Spleen (tissue), 13 donors: ENCODE measurements at regions of chr4 and their contacts with region 1.

Region 1: DNA sequence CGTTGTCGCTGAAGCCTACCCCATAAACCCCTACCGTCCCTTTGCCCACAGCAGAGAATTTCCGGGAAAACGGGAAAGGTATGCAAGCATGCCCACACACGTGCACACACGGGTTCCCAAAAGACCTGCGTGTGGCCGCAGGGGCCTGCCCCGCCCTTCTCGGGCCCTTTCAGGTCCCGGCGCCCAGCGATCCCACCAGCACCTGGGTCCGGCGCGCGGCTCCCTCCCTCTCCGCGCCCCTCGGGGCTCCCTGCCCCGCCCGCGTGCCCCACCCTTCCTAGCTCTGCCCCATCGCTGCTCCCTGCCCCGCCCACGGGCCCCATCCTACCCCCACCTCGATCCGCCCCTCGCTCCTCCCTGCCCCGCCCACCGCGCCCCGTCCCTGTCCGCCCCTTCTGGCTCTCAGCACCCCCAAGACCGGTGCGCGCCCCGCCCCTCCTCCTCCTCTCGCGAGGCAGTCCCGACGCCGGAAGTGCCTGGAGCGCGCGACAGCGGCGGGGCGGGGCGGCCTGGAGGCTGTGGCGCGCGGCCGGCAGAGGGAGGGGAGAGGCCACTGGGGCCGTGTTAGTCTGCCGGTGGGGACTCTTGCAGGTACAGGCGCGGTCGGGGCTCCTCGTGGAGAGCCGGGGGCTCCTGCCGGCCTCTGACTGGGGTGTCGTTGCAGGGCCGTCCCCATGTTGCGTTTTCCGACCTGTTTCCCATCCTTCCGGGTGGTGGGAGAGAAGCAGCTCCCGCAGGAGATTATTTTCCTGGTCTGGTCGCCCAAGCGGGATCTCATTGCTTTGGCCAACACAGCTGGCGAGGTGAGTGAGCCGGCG is at the start of gene ANAPC4:
- DNase-seq: peak; percentile 99
- H3K4me3 ChIP-seq: peak within 1 kb of the TSS; percentile 56 to 94 (median 86)
- H3K27ac ChIP-seq: peak within 1 kb of the TSS; percentile 8 to 88 (median 80)
- H3K4me1 ChIP-seq: peaks cover 11 to 39% (median 19%) of the 10 kb centered on the region in 6 donors
- H3K27me3 ChIP-seq: no peaks in the 10 kb centered on the region
- CTCF ChIP-seq: peak in 6 of 11 experiments; percentile 8 to 65 (median 34)
- POLR2A ChIP-seq: peak in 2 of 3 donors; percentile 17 to 33
- total RNA-seq, gene ANAPC4: 32.6 to 58.9 (median 44.0) TPM

Region 2: DNA sequence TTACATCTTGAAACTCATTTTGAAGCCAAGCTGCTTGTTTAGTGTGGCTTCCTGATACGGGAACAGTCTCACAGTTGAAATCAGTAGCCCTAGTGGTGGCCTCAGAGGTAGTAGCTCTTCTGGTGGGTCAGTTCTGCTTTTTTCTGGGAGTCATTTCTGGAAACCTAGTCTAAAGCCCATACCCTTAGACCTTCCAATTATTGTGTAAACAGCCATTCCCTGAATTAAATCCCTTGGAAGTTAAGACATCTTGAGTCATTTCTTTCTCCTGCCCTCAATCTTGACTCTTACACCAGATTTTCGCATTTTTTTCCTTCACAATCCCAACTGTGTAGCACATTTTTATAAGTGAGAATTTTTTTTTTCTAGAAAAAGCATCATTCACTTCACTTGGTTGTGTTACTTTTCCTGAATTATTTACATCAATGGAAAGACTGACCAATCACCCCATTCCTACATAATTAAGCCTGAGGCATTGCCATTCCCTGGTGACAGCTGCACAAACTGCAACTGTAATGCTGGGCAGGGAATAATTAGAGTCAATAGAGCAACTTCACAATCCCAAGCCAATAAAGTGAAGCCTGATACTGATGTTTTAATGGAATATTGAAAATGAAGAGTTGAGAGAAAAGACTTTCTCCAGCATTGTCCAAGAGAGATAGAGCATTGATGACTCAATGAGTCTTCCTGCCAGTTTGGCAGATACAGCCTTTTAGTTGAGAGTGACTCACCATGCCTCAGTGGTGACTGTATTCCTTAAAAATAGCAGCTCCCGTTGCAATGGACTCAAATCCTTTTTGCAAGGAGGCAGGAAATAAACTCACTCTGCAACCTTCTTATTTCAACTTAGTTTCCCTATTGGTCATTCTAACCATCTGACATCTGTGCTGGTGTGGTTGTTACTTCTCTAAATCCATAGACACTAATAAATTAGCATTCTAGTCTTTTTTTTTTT is 203.7 kb before region 1 on chr4:
- intact Hi-C with region 1: loop called (anchors 10 kb)
- DNase-seq: no peak
- H3K4me3 ChIP-seq: no peak overlapping the region
- H3K27ac ChIP-seq: peak overlapping the region in 4 of 8 donors; percentile 8 to 34 (median 12)
- H3K4me1 ChIP-seq: peaks cover 0 to 24% (median 3%) of the 10 kb centered on the region in 6 donors
- H3K27me3 ChIP-seq: no peaks in the 10 kb centered on the region
- CTCF ChIP-seq: no peak
- POLR2A ChIP-seq: no peak

Region 3: DNA sequence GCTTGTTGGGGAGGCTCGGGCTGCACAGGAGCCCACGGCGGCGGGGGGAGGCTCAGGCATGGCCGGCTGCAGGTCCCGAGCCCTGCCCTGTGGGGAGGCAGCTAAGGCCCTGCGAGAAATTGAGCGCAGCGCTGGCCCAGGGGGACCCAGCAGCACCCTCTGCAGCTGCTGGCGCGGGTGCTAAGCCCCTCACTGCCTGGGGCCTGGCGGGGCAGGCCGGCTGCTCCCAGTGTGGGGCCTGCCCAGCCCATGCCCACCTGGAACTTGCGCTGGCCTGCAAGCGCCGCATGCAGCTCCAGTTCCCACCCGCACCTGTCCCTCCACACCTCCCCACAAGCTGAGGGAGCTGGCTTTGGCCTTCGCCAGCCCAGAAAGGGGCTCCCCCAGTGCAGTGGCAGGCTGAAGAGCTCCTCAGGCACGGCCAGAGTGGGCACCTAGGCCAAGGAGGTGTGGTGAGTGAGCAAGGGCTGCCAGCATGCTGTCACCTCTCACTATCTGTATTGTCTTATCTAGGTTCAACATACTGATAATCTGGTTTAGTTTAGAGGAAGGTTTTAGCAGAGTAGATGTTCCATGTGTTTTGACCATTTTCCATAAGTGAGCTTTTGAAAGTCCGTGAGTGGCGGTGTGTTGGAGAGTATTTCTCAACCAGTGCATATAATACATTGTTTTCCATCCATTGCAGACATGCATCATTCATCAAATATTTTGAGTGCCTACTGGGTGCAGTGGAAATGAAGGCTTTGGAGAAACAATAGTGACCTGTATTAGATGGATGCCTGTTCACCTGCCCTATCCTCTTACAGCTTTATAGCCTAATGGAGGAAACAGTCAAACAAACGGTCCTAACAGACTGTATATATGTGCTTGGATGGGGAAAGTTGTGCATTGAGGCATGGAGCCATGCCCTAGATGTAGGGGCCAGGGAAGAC is 130.0 kb before region 1 on chr4:
- intact Hi-C with region 1: no loop called
- DNase-seq: no peak
- H3K4me3 ChIP-seq: no peak overlapping the region
- H3K27ac ChIP-seq: no peak overlapping the region
- H3K4me1 ChIP-seq: peaks cover 0 to 14% (median 0%) of the 10 kb centered on the region in 6 donors
- H3K27me3 ChIP-seq: no peaks in the 10 kb centered on the region
- CTCF ChIP-seq: no peak
- POLR2A ChIP-seq: no peak

Region 4: DNA sequence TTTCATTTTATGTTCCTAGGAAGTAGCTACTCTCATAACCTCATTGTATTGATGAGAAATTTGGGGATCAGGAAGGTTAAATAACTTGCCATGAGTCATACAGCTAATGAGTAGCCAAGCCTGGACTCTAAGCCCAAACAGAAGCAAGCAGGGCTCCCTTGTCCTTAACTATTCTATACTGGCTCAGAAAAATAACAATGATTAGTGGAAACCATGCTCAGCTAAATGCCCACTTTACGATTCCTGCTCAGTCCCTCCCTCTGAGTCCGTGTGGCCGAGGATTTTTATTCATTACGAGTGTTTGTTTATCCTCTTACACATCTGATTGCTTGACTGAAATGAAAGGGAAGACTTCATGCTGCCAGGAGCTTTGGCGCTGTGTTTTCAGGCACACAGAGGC is 379.5 kb after region 1 on chr4:
- intact Hi-C with region 1: no loop called
- DNase-seq: no peak
- H3K4me3 ChIP-seq: no peak overlapping the region
- H3K27ac ChIP-seq: no peak overlapping the region
- H3K4me1 ChIP-seq: no peaks in the 10 kb centered on the region
- H3K27me3 ChIP-seq: no peaks in the 10 kb centered on the region
- CTCF ChIP-seq: no peak
- POLR2A ChIP-seq: no peak